ENCODE measurements at regions of chr6 and their contacts with region 1.

Region 1: DNA sequence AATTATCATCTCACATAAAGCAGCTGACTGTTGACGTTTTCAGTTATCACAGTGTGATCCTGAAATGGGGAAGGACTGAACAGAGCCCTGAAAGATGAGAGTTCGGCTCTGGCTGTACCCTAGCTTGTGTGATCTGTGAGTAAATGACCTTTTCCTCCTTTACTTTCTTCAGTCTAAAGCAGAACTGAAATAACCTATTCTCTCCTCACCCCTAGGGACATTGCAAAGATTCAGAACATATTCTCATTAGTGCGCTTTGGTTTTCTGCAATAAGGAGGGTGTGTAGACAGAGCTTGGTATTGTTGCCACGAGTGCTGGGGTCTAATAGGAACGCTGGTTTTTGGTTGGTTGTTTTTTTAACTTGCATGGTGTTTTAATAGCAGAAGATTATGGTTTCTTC is 16.7 kb downstream of the FARS2 start:
- DNase-seq: no peak
- ATAC-seq: peak; percentile 84
- H3K4me3 Mint-ChIP-seq: peak overlapping the region; percentile 81
- H3K27ac Mint-ChIP-seq: peak overlapping the region; percentile 91
- H3K4me1 Mint-ChIP-seq: peaks cover 57% of the 10 kb centered on the region
- H3K27me3 Mint-ChIP-seq: no peaks in the 10 kb centered on the region
- CTCF ChIP-seq: no peak

Region 2: GRCh38 chr6:5167501-5167900 is 110.5 kb before region 1 on chr6:
- CTCF ChIA-PET with region 1: no interaction called
- POLR2A ChIA-PET with region 1: no interaction called
- intact Hi-C with region 1: no loop called
- DNase-seq: no peak
- ATAC-seq: no peak
- H3K4me3 Mint-ChIP-seq: no peak overlapping the region
- H3K27ac Mint-ChIP-seq: no peak overlapping the region
- H3K4me1 Mint-ChIP-seq: no peaks in the 10 kb centered on the region
- H3K27me3 Mint-ChIP-seq: no peaks in the 10 kb centered on the region
- CTCF ChIP-seq: no peak

Region 3: GRCh38 chr6:5292154-5292553 is 14.1 kb after region 1 on chr6:
- CTCF ChIA-PET with region 1: no interaction called
- POLR2A ChIA-PET with region 1: interaction called, 5 read pairs
- intact Hi-C with region 1: loop called (anchors 1 kb)
- DNase-seq: no peak
- ATAC-seq: no peak
- H3K4me3 Mint-ChIP-seq: no peak overlapping the region
- H3K27ac Mint-ChIP-seq: peak overlapping the region; percentile 46
- H3K4me1 Mint-ChIP-seq: peaks cover 61% of the 10 kb centered on the region
- H3K27me3 Mint-ChIP-seq: no peaks in the 10 kb centered on the region
- CTCF ChIP-seq: no peak

Region 4: DNA sequence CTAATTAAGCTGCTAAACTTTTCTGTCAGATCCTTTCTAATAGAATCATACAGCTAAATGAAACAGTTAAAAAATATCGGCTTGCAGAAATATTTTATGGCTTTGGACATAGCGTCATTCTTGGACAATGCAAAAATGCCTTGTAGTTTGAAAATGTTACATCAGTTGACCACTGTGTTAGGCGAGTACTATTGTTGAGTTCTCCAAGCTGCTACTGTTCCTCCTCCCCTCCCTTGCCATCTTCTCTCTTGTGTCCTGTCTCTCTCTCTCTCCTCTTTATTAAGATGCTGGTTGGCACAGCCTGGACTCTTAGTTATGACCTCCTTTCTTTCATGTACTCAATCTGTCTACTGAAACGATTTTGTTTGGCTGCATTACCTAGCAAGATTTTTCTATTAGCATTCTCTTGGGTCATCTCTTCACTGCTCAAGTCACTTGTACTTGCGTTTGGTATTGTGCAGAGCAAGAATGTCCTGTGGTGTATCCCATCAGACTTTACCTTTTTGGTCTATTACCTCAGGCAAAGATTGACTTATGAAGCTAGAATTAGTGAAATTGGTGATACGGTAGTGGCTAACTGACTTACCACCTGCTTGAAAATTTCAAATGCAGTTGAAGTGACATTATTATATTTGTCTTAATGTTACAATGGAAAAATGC is 111.2 kb after region 1 on chr6:
- CTCF ChIA-PET with region 1: no interaction called
- POLR2A ChIA-PET with region 1: no interaction called
- intact Hi-C with region 1: no loop called
- DNase-seq: no peak
- ATAC-seq: no peak
- H3K4me3 Mint-ChIP-seq: no peak overlapping the region
- H3K27ac Mint-ChIP-seq: no peak overlapping the region
- H3K4me1 Mint-ChIP-seq: no peaks in the 10 kb centered on the region
- H3K27me3 Mint-ChIP-seq: no peaks in the 10 kb centered on the region
- CTCF ChIP-seq: no peak

Region 5: DNA sequence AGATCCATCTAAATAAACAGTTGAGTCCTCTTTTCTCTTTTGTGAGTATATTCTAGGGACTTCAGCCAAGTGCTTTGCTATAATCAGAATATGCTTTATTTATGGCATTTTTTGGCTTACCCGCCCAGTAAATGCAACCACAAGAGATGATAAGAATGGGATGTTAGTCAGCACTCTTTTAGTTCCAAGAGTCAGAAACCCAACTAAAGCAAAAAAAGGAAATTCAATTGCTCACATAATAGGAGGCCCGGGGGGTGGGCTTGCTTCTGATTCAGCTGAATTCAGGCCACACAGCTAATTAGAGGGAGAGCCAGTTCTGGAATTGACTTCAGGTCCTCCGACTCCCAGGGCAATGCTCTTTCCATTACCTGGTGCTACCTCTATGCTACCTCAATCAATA is 233.9 kb after region 1 on chr6:
- CTCF ChIA-PET with region 1: no interaction called
- POLR2A ChIA-PET with region 1: no interaction called
- intact Hi-C with region 1: no loop called
- DNase-seq: no peak
- ATAC-seq: no peak
- H3K4me3 Mint-ChIP-seq: no peak overlapping the region
- H3K27ac Mint-ChIP-seq: no peak overlapping the region
- H3K4me1 Mint-ChIP-seq: peaks cover 19% of the 10 kb centered on the region
- H3K27me3 Mint-ChIP-seq: no peaks in the 10 kb centered on the region
- CTCF ChIP-seq: no peak

Measured in activated B cell treated with CpG ODN at 0.5 μM for 24 hours (primary cell).